Activated CD4-positive, alpha-beta T cell treated with anti-CD3 and anti-CD28 coated beads, Interleukin-2, amount 10 ng/mL, durations not matched to agents 24 days and 14 days (primary cell): ENCODE measurements at regions of chr11 and their contacts with region 1.

Region 1: GRCh38 chr11:26905368-26905767 is 88.5 kb upstream of the FIBIN start:
- DNase-seq: no peak
- H3K4me3 Mint-ChIP-seq: no peak overlapping the region
- H3K27ac Mint-ChIP-seq: no peak overlapping the region
- H3K4me1 Mint-ChIP-seq: no peaks in the 10 kb centered on the region
- H3K27me3 Mint-ChIP-seq: no peaks in the 10 kb centered on the region

Region 2: DNA sequence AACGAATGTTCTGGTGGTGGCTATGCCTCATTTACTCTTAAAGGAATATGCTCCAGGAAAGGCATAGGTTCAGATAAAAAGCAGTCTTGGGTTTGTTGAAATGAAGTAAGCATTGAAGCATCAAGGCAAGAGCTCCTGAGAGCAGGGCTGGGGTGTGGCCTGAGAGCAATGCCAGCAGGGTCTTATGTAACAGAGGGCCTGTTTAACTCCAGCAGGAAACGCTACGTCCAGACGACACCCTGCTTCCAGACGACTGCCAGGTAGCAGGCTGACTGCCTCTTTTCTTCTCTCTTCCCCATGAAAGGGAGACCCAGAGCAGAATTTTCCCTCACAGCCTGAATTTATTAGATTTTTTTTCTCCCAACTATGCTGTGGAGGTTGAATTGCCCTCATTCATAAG is 56.3 kb before region 1 on chr11:
- intact Hi-C with region 1: no loop called
- DNase-seq: no peak
- H3K4me3 Mint-ChIP-seq: no peak overlapping the region
- H3K27ac Mint-ChIP-seq: no peak overlapping the region
- H3K4me1 Mint-ChIP-seq: no peaks in the 10 kb centered on the region
- H3K27me3 Mint-ChIP-seq: no peaks in the 10 kb centered on the region

Region 3: DNA sequence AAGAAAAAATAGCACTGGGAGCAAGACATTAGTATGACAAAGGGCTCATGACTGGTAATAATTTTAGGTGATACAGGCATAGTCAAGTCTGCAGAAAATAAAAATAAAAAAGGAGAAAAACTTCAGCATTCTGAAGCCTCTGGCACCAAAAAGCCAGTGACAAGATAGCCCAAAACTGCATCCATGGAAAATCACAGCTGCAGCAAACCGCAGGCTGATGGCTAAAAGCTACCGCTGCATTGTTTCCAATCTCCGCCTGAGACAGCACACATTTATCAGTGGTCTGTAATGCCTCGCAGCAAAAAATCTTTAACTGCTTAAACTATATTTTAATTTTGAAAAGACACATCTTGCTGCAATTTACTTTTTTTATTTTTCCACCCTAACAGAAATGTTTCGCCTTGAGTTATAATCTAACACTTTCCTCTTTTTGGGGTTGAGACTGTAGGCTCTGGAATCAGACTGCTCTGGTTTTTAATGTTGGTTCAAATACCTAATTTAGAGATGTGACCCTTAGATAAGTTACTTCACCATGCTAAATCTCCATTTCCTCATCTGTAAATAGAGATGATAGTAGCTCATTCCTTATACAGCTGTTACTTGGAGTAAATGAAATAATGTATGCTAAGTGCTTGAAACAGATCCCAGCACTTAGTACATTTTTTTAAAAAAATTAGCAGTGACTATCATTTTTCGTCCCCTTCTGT is 46.6 kb after region 1 on chr11:
- intact Hi-C with region 1: loop called (anchors 1 kb)
- DNase-seq: no peak
- H3K4me3 Mint-ChIP-seq: no peak overlapping the region
- H3K27ac Mint-ChIP-seq: no peak overlapping the region
- H3K4me1 Mint-ChIP-seq: no peaks in the 10 kb centered on the region
- H3K27me3 Mint-ChIP-seq: no peaks in the 10 kb centered on the region